GM12878 (cell line): ENCODE measurements at regions of chr21 and their contacts with region 1.

Region 1: GRCh38 chr21:46253610-46254124 is 25.1 kb upstream of the LSS start:
- DNase-seq: peak; percentile 89
- ATAC-seq: peak; percentile 93
- H3K4me3 ChIP-seq: no peak overlapping the region
- H3K27ac ChIP-seq: peak overlapping the region; percentile 55
- H3K4me1 ChIP-seq: peaks cover 15% of the 10 kb centered on the region
- H3K27me3 ChIP-seq: no peaks in the 10 kb centered on the region
- CTCF ChIP-seq: no peak
- EP300 ChIP-seq: no peak
- POLR2A ChIP-seq: no peak
- RAD21 ChIP-seq: no peak

Region 2: DNA sequence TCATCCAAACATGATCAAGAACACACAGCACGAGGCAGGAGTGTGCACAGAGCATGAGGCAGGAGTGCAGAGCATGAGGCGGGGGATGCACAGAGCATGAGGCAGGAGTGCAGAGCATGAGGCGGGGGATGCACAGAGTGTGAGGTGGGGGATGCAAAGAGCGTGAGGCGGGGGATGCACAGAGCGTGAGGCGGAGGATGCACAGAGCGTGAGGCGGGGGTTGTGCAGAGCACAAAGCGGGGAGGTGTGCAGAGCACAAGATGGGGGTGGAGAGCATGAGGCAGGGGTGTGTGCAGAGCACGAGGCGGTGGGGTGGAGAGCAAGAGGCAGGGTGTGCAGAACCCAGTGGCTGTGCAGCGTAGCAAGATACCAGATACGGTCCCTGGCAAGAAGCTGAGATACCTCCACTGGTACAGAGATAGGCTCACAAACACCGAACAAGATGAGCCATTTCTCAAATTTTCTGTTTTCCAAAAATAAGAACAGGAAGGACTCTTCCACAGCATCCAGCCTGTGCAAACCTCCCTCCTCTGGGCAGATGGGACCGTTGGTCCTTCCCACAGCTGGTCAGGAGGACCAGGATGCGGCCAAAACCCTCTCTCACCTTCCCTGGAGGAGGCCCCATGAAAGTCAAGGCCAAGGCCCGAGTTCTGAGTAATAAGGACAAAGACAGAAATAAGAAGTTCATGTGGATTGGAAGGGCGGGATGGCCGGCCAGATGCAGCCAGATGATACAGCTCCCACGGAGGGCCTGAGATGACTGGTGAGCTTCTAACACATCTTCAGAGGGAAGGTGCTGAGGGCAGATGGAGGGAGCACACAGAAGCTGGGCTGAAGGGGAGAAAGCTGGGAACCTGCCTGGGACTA is 81.4 kb before region 1 on chr21:
- CTCF ChIA-PET with region 1: no interaction called
- POLR2A ChIA-PET with region 1: no interaction called
- RAD21 ChIA-PET with region 1: no interaction called
- SMC1A ChIA-PET with region 1: no interaction called
- in situ Hi-C with region 1: no loop called
- intact Hi-C with region 1: no loop called
- DNase-seq: no peak
- ATAC-seq: no peak
- H3K4me3 ChIP-seq: no peak overlapping the region
- H3K27ac ChIP-seq: no peak overlapping the region
- H3K4me1 ChIP-seq: no peaks in the 10 kb centered on the region; the same call in 1 of the 2 replicates
- H3K27me3 ChIP-seq: no peaks in the 10 kb centered on the region
- CTCF ChIP-seq: no peak
- EP300 ChIP-seq: no peak
- POLR2A ChIP-seq: no peak
- RAD21 ChIP-seq: no peak

Region 3: GRCh38 chr21:46228345-46229051 is 25.2 kb before region 1 on chr21 and contains the start of gene LSS:
- CTCF ChIA-PET with region 1: interaction called, 59 read pairs
- POLR2A ChIA-PET with region 1: interaction called, 8 read pairs
- RAD21 ChIA-PET with region 1: interaction called, 19 read pairs
- SMC1A ChIA-PET with region 1: interaction called, 15 read pairs
- in situ Hi-C with region 1: no loop called
- intact Hi-C with region 1: no loop called
- DNase-seq: peak; percentile 83
- ATAC-seq: peak; percentile 90
- H3K4me3 ChIP-seq: peak within 1 kb of the TSS; percentile 81
- H3K27ac ChIP-seq: peak within 1 kb of the TSS; percentile 73
- H3K4me1 ChIP-seq: peaks cover 5% of the 10 kb centered on the region; the same call in 1 of the 2 replicates
- H3K27me3 ChIP-seq: no peaks in the 10 kb centered on the region
- CTCF ChIP-seq: no peak
- EP300 ChIP-seq: no peak
- POLR2A ChIP-seq: peak; percentile 80
- RAD21 ChIP-seq: no peak
- polyA plus RNA-seq, gene LSS: 2.9 to 3.7 TPM